Naive thymus-derived CD4-positive, alpha-beta T cell (primary cell): ENCODE measurements at regions of chr14 and their contacts with region 1.

Region 1: GRCh38 chr14:103385152-103385993 is at the start of gene MARK3:
- DNase-seq: peak; percentile 92 to 96 (median 95)
- ATAC-seq: peak; percentile 93
- H3K4me3 ChIP-seq: peak within 1 kb of the TSS; percentile 98
- H3K4me3 Mint-ChIP-seq: peak within 1 kb of the TSS; percentile 94 to 99 (median 96)
- H3K27ac ChIP-seq: peak within 1 kb of the TSS; percentile 90
- H3K27ac Mint-ChIP-seq: peak within 1 kb of the TSS; percentile 91 to 98 (median 95)
- H3K4me1 ChIP-seq: peaks cover 26 to 32% of the 10 kb centered on the region in 2 donors
- H3K4me1 Mint-ChIP-seq: peaks cover 12 to 51% (median 37%) of the 10 kb centered on the region in 7 donors
- H3K27me3 ChIP-seq: no peaks in the 10 kb centered on the region
- H3K27me3 Mint-ChIP-seq: peaks cover 0 to 13% (median 9%) of the 10 kb centered on the region in 5 donors
- total RNA-seq, gene MARK3: 86.9 to 133 (median 116) TPM

Region 2: DNA sequence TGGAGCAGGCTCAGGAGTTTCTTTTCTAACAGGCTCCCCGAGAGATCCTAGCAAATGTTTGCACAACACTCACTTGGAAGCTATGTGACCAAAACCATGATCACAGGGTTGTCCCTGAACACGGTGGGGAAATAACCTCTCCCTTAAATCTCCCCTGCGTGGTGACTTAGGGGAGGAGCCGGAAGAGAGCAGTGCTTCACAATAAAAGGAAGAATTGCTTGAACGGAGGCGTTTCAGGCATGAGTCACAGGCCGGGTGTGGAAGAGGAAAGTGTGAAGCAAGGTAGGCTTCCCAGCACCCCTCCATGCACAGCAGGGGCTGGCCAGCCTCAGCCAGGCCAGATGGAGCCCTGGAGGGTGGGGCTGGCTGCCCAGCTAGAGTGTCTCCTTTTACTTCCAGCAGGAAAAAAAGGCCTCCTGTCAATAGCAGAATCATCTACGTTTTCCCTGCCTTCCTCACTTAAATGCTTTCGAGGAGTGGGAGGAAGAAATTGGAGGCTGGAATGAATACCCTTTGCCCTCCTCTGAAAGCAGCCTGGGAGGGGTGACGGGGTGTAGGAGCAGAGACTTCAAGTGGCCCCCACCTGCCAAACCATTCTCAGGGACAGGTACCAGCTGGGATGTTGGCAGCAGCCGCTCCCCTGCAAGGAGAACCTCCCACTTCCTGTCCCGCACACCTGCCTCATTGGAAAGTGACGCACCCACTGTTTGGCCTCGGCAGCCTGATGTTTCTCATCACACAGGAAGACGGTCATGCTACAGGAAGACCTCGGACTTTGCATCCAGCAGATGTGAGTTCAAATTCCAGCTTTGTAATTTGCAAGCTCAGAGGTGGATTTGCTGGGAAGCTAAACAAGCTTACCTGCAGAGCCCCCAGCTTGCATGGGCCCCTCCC is 1653.9 kb before region 1 on chr14:
- CTCF ChIA-PET with region 1: no interaction called
- POLR2A ChIA-PET with region 1: no interaction called
- intact Hi-C with region 1: loop called in 1 of 2 experiments (anchors 10 kb)
- DNase-seq: peak; percentile 37 to 90 (median 78)
- ATAC-seq: peak; percentile 96
- H3K4me3 ChIP-seq: peak overlapping the region; percentile 53
- H3K4me3 Mint-ChIP-seq: peak overlapping the region; percentile 79 to 95 (median 84)
- H3K27ac ChIP-seq: peak overlapping the region; percentile 82
- H3K27ac Mint-ChIP-seq: peak overlapping the region; percentile 93 to 99 (median 98)
- H3K4me1 ChIP-seq: peaks cover 26 to 36% of the 10 kb centered on the region in 2 donors
- H3K4me1 Mint-ChIP-seq: peaks cover 12 to 62% (median 47%) of the 10 kb centered on the region in 7 donors
- H3K27me3 ChIP-seq: no peaks in the 10 kb centered on the region
- H3K27me3 Mint-ChIP-seq: no peaks in the 10 kb centered on the region

Region 3: GRCh38 chr14:103401223-103402214 is 16.1 kb after region 1 on chr14:
- CTCF ChIA-PET with region 1: interaction called, 3 read pairs
- POLR2A ChIA-PET with region 1: interaction called, 3 read pairs
- intact Hi-C with region 1: loop called in 1 of 2 experiments (anchors 2 kb)
- DNase-seq: peak in 1 of 9 donors; percentile 9
- ATAC-seq: peak; percentile 31
- H3K4me3 ChIP-seq: no peak overlapping the region
- H3K4me3 Mint-ChIP-seq: peak overlapping the region; percentile 12 to 55 (median 41)
- H3K27ac ChIP-seq: no peak overlapping the region
- H3K27ac Mint-ChIP-seq: peak overlapping the region; percentile 13 to 87 (median 38)
- H3K4me1 ChIP-seq: peaks cover 17 to 49% of the 10 kb centered on the region in 2 donors
- H3K4me1 Mint-ChIP-seq: peaks cover 52 to 80% (median 71%) of the 10 kb centered on the region in 7 donors
- H3K27me3 ChIP-seq: no peaks in the 10 kb centered on the region
- H3K27me3 Mint-ChIP-seq: no peaks in the 10 kb centered on the region

Region 4: DNA sequence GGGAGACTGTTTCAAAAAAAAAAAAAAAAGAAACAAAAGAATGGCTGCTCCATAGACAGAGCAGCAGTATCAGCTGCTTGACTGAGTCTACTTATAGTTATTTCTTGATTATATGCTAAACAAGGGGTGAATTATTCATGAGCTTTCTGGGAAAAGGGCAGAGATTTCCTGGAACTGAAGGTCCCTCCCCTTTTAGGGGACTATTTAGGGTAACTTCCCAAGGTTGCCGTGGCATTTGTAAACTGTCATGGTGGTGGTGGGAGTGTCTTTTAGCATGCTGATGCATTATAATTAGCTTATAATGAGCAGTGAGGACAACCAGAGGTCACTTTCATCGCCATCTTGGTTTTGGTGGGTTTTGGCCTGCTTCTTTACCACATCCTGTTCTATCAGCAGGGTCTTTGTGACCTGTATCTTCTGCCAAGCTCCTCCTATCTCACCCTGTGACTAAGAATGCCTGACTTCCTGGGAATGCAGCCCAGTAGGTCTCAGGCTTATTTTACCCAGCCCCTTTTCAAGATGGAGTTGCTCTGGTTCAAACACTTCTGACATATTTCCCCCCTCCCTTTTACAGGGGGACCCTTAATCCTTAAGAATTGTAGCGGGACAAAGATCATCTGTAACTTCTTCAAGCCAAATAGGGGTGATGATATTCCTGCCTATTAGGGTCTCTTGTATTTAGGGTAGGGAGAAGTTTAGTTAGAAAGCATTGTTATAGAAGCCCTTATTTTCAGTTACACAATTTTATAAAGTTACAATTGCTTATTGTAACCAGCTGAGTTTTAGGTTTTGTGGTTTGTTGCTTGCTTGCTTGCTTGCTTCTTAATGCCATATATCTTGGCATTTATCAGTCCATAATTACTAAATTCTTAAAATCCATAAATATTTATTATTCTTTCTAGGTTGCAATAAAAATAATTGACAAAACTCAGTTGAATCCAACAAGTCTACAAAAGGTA is 42.4 kb after region 1 on chr14:
- CTCF ChIA-PET with region 1: no interaction called
- POLR2A ChIA-PET with region 1: no interaction called
- intact Hi-C with region 1: no loop called
- DNase-seq: peak in 1 of 9 donors; percentile 3
- ATAC-seq: peak; percentile 20
- H3K4me3 ChIP-seq: no peak overlapping the region
- H3K4me3 Mint-ChIP-seq: no peak overlapping the region
- H3K27ac ChIP-seq: no peak overlapping the region
- H3K27ac Mint-ChIP-seq: peak overlapping the region in 4 of 9 donors; percentile 20 to 75 (median 50)
- H3K4me1 ChIP-seq: peaks cover 12 to 21% of the 10 kb centered on the region in 2 donors
- H3K4me1 Mint-ChIP-seq: peaks cover 20 to 63% (median 38%) of the 10 kb centered on the region in 7 donors
- H3K27me3 ChIP-seq: no peaks in the 10 kb centered on the region
- H3K27me3 Mint-ChIP-seq: no peaks in the 10 kb centered on the region

Region 5: GRCh38 chr14:103562429-103563225 is 177.3 kb after region 1 on chr14 and contains the starts of genes BAG5 and COA8:
- CTCF ChIA-PET with region 1: no interaction called
- POLR2A ChIA-PET with region 1: no interaction called
- intact Hi-C with region 1: loop called (anchors 1 kb)
- DNase-seq: peak; percentile 81 to 94 (median 88)
- ATAC-seq: peak; percentile 91
- H3K4me3 ChIP-seq: peak within 1 kb of the TSS; percentile 91
- H3K4me3 Mint-ChIP-seq: peak within 1 kb of the TSS; percentile 91 to 98 (median 94)
- H3K27ac ChIP-seq: peak within 1 kb of the TSS; percentile 87
- H3K27ac Mint-ChIP-seq: peak within 1 kb of the TSS; percentile 87 to 96 (median 92)
- H3K4me1 ChIP-seq: peaks cover 32 to 38% of the 10 kb centered on the region in 2 donors
- H3K4me1 Mint-ChIP-seq: peaks cover 47 to 73% (median 62%) of the 10 kb centered on the region in 7 donors
- H3K27me3 ChIP-seq: no peaks in the 10 kb centered on the region
- H3K27me3 Mint-ChIP-seq: no peaks in the 10 kb centered on the region
- total RNA-seq, gene BAG5: 29.9 to 38.9 (median 36.4) TPM
- total RNA-seq, gene COA8: 13.6 to 26.3 (median 24.1) TPM

Region 6: DNA sequence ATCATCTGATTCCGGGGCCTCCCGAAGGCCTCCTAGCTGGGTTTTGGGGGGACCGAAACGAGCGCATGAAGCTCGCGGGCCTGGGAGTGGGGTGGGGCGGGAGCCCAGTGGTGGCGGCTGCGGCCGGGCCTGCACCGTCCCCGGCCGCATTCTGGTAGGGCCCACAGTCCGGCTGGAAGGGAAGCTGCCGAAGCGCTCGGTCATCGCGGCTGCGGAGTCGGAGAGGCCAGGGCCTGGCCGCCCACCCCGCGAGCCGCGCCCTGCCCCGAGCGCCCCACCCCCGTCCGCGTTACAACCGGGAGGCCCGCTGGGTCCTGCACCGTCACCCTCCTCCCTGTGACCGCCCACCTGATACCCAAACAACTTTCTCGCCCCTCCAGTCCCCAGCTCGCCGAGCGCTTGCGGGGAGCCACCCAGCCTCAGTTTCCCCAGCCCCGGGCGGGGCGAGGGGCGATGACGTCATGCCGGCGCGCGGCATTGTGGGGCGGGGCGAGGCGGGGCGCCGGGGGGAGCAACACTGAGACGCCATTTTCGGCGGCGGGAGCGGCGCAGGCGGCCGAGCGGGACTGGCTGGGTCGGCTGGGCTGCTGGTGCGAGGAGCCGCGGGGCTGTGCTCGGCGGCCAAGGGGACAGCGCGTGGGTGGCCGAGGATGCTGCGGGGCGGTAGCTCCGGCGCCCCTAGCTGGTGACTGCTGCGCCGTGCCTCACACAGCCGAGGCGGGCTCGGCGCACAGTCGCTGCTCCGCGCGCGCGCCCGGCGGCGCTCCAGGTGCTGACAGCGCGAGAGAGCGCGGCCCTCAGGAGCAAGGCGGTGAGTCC is 243.5 kb after region 1 on chr14 and contains the start of gene KLC1:
- CTCF ChIA-PET with region 1: no interaction called
- POLR2A ChIA-PET with region 1: no interaction called
- intact Hi-C with region 1: loop called in 1 of 2 experiments (anchors 5 kb)
- DNase-seq: peak; percentile 71 to 93 (median 84)
- ATAC-seq: peak; percentile 87
- H3K4me3 ChIP-seq: peak within 1 kb of the TSS; percentile 78
- H3K4me3 Mint-ChIP-seq: peak within 1 kb of the TSS; percentile 74 to 91 (median 88)
- H3K27ac ChIP-seq: peak within 1 kb of the TSS; percentile 98
- H3K27ac Mint-ChIP-seq: peak within 1 kb of the TSS; percentile 60 to 93 (median 88)
- H3K4me1 ChIP-seq: peaks cover 18 to 29% of the 10 kb centered on the region in 2 donors
- H3K4me1 Mint-ChIP-seq: peaks cover 23 to 64% (median 38%) of the 10 kb centered on the region in 7 donors
- H3K27me3 ChIP-seq: no peaks in the 10 kb centered on the region
- H3K27me3 Mint-ChIP-seq: no peaks in the 10 kb centered on the region
- total RNA-seq, gene KLC1: 150 to 268 (median 174) TPM